Posterior cingulate gyrus (tissue), 11 donors: ENCODE measurements at regions of chr7 and their contacts with region 1.

Region 1: GRCh38 chr7:92598310-92598981 is 8.3 kb upstream of the FAM133B start:
- DNase-seq: no peak

Region 2: GRCh38 chr7:92071032-92071431 is 527.4 kb before region 1 on chr7:
- intact Hi-C with region 1: no loop called
- DNase-seq: no peak

Region 3: GRCh38 chr7:93055543-93056107 is 457.2 kb after region 1 on chr7:
- intact Hi-C with region 1: loop called (anchors 10 kb)
- DNase-seq: no peak